ENCODE measurements at regions of chr3 and their contacts with region 1.

Region 1: DNA sequence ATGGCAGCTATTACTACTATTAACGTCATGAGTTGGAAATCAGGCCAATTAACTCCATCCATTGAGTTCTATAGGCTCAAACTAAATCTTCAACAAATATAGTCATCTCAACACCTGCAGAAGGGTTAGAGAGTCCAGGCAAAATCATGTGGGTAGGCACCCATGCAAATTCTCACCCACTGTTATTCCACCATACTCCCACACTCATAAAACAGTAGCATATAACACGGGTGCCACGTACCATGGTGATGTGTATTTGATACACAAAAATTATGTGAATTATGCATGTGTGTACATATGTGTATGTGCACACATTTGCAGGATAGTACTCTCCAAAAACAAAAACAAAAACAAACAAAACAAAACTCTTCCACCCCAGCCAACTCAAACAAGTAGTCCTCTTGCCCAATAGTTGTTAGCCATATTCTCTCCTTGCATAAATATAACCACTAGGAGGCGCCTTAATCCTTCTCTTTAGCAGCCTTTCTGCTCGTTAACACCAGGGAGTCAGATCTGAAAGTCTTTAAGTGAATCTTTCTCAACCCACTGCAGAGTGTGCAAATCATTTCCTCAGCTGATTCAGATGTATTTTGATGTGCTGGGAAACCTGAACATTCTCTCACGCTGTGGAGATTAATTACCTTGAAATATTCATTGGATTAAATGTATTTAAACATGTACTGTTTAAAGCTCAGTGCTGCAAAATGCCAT is 38.0 kb upstream of the COPB2 start:
- DNase-seq: peak; percentile 67
- H3K4me3 ChIP-seq: no peak overlapping the region
- H3K27ac ChIP-seq: no peak overlapping the region
- H3K4me1 ChIP-seq: no peaks in the 10 kb centered on the region
- H3K27me3 ChIP-seq: no peaks in the 10 kb centered on the region
- CTCF ChIP-seq: peak; percentile 80 to 81

Region 2: DNA sequence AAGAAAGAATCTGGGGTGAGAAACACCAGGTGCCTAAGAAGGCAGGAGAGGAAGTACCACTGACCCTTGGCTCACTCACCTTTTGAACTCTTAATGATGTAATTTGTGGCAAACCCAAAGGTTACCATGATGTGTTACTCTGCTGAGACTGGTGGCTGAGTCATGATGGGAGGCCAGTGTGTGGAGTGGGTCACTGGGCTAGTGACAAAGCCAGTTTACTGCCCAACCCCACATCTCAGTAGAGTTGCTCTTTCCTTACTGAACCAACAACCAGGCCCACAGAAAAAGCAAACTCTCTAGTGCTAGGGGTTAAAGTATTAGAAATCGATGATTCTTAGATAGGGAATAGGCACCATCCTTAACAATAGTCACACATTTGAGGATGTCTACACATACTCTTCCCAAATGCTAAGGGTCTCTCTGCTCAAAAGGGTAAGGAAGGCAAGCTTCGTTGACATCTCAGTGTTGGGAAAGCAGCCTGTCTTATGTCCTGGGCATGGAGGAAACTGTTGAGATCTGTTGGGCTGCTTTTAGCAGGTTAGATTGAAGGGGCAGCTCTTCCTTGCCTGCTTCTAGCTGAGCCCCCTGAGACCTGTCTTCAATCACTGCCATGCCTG is 45.8 kb after region 1 on chr3:
- CTCF ChIA-PET with region 1: no interaction called
- dilution Hi-C with region 1: loop called (anchors 5 kb)
- in situ Hi-C with region 1: no loop called
- intact Hi-C with region 1: no loop called
- DNase-seq: peak; percentile 43
- H3K4me3 ChIP-seq: no peak overlapping the region
- H3K27ac ChIP-seq: no peak overlapping the region
- H3K4me1 ChIP-seq: no peaks in the 10 kb centered on the region
- H3K27me3 ChIP-seq: no peaks in the 10 kb centered on the region
- CTCF ChIP-seq: no peak

Region 3: DNA sequence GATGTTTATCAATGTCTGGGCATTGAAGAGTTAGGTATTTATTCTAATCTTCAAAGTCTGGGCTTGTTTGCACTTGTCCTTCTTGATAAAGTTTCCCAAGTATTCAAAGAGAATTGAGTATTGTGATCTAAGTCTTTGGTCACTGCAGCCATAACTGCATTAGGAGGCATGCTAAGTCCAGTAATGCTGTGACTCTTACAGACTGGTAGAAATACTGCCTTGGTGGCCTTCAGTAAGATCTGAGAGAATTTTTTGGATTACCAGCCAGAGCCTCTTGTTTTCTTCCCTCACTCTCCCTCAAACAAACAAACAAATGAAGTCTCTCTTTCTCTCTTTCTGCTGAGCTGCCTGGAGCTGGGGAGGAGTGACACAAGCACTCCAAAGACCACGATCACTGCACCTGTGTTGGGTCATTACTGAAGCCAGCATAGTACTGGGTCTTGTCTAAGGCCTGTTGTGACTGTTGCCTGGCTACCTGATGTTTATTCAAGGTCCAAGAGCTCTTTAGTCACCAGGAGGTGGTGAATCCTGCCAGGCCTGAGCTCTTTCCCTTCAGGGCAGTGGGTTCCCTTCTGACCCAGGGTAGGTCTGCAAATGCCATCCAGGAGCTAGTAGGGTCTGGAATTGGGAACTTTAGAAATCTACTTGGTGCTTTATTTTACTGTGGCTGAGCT is 63.7 kb after region 1 on chr3:
- CTCF ChIA-PET with region 1: no interaction called
- dilution Hi-C with region 1: no loop called
- in situ Hi-C with region 1: no loop called
- intact Hi-C with region 1: no loop called
- DNase-seq: peak; percentile 49
- H3K4me3 ChIP-seq: no peak overlapping the region
- H3K27ac ChIP-seq: no peak overlapping the region
- H3K4me1 ChIP-seq: peaks cover 7% of the 10 kb centered on the region
- H3K27me3 ChIP-seq: no peaks in the 10 kb centered on the region
- CTCF ChIP-seq: no peak

Region 4: GRCh38 chr3:139519998-139520737 is 92.7 kb after region 1 on chr3:
- CTCF ChIA-PET with region 1: no interaction called
- dilution Hi-C with region 1: no loop called
- in situ Hi-C with region 1: no loop called
- intact Hi-C with region 1: loop called (anchors 1 kb)
- DNase-seq: peak; percentile 41
- H3K4me3 ChIP-seq: no peak overlapping the region
- H3K27ac ChIP-seq: no peak overlapping the region
- H3K4me1 ChIP-seq: no peaks in the 10 kb centered on the region
- H3K27me3 ChIP-seq: no peaks in the 10 kb centered on the region
- CTCF ChIP-seq: peak; percentile 42 to 54

Region 5: DNA sequence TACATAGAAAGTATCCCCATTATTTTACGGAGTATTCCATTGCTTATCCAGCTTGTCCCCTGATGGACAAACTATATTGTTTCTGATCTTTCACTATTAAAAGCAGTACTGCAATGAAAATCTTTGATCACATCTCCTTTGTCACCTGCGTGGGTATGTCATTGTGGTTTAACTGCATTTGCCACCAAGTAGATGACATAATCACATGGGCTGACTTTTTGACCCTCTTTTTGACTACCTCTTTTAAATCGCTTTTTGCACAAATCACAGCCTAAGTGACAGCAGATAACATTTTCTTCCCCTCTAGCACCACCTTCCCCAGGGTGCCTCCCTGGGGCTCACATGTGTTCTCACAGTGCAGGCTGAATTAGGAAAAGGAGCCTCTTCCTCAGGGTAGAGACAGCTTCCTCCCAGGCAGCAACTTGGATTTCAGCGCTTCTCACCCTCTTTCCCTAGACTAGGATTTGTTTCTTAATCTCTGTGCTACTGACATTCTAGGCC is 113.3 kb after region 1 on chr3:
- CTCF ChIA-PET with region 1: no interaction called
- dilution Hi-C with region 1: loop called (anchors 10 kb)
- in situ Hi-C with region 1: loop called in 1 of 2 experiments (anchors 10 kb)
- intact Hi-C with region 1: no loop called
- DNase-seq: no peak
- H3K4me3 ChIP-seq: no peak overlapping the region
- H3K27ac ChIP-seq: no peak overlapping the region
- H3K4me1 ChIP-seq: peaks cover 29% of the 10 kb centered on the region
- H3K27me3 ChIP-seq: no peaks in the 10 kb centered on the region
- CTCF ChIP-seq: no peak

Region 6: GRCh38 chr3:139629033-139629432 is 201.6 kb after region 1 on chr3:
- CTCF ChIA-PET with region 1: no interaction called
- dilution Hi-C with region 1: no loop called
- in situ Hi-C with region 1: no loop called
- intact Hi-C with region 1: loop called (anchors 2 kb)
- DNase-seq: peak; percentile 68
- H3K4me3 ChIP-seq: no peak overlapping the region
- H3K27ac ChIP-seq: no peak overlapping the region
- H3K4me1 ChIP-seq: peaks cover 3% of the 10 kb centered on the region
- H3K27me3 ChIP-seq: no peaks in the 10 kb centered on the region
- CTCF ChIP-seq: peak; percentile 76 to 77

Region 7: DNA sequence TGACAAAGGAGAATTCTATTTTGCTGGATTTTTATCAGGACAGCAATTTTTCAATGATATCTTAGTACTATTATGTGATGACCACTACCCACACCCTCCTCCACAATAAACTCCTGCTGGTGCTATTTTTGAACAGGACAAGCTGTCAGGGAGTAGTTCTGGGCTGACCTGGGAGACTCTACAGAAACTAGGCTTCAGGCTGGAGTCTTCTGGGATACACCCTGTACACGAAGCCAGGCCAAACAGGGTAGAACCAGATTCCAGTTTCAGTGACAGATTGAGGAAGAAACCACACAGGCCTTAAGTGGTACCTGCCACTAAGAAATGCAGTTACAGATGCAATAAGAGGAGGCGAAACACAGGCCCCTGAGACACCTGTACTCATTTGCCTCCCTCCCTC is 237.5 kb after region 1 on chr3:
- CTCF ChIA-PET with region 1: no interaction called
- dilution Hi-C with region 1: loop called (anchors 10 kb)
- in situ Hi-C with region 1: no loop called
- intact Hi-C with region 1: no loop called
- DNase-seq: no peak
- H3K4me3 ChIP-seq: no peak overlapping the region
- H3K27ac ChIP-seq: no peak overlapping the region
- H3K4me1 ChIP-seq: no peaks in the 10 kb centered on the region
- H3K27me3 ChIP-seq: no peaks in the 10 kb centered on the region
- CTCF ChIP-seq: no peak

Measured in mammary epithelial cell (primary cell).